Activated T-helper 1 cell treated with anti-CD3 and anti-CD28 coated beads, Interleukin-12 subunit alpha, Interleukin-12 subunit beta, Interleukin-2, Interleukin-4 antibody, amounts not matched to agents 30 ng/mL and 10 ng/mL and 1 ng/mL, durations not matched to agents 14 hours and 24 hours and 36 hours (primary cell): ENCODE measurements at regions of chr9 and their contacts with region 1.

Region 1: GRCh38 chr9:84296146-84296843 is 44.3 kb downstream of the SLC28A3 start:
- DNase-seq: peak; percentile 61
- H3K4me3 Mint-ChIP-seq: peak overlapping the region; percentile 66
- H3K27ac Mint-ChIP-seq: peak overlapping the region; percentile 100
- H3K4me1 Mint-ChIP-seq: peaks cover 83% of the 10 kb centered on the region
- H3K27me3 Mint-ChIP-seq: no peaks in the 10 kb centered on the region

Region 2: GRCh38 chr9:83707768-83708514 is 588.4 kb before region 1 on chr9 and contains the start of gene UBQLN1:
- intact Hi-C with region 1: loop called (anchors 5 kb)
- DNase-seq: peak; percentile 89
- H3K4me3 Mint-ChIP-seq: peak within 1 kb of the TSS; percentile 87
- H3K27ac Mint-ChIP-seq: peak within 1 kb of the TSS; percentile 96
- H3K4me1 Mint-ChIP-seq: peaks cover 36% of the 10 kb centered on the region
- H3K27me3 Mint-ChIP-seq: no peaks in the 10 kb centered on the region
- total RNA-seq, gene UBQLN1: 142 and 143 TPM in 2 replicates

Region 3: DNA sequence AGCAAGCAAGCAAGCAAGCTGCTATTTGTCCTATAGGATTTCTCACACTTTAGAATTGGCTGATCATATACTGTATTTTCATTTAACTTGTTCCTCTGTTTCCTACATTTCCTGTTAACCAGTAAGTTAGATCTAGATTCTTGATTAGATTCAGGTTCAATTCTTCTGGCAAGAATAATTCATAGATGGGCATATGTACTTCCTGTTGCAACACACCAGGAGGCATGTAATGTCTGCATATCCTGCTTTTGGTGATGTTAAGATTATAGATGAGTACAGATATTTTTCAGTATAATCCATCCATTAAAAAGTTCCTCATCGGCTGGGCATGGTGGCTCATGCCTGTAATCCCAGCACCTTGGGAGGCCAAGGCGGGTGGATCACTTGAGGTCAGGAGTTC is 364.3 kb before region 1 on chr9:
- intact Hi-C with region 1: no loop called
- DNase-seq: no peak
- H3K4me3 Mint-ChIP-seq: no peak overlapping the region
- H3K27ac Mint-ChIP-seq: no peak overlapping the region
- H3K4me1 Mint-ChIP-seq: peaks cover 13% of the 10 kb centered on the region
- H3K27me3 Mint-ChIP-seq: peaks cover 3% of the 10 kb centered on the region

Region 4: DNA sequence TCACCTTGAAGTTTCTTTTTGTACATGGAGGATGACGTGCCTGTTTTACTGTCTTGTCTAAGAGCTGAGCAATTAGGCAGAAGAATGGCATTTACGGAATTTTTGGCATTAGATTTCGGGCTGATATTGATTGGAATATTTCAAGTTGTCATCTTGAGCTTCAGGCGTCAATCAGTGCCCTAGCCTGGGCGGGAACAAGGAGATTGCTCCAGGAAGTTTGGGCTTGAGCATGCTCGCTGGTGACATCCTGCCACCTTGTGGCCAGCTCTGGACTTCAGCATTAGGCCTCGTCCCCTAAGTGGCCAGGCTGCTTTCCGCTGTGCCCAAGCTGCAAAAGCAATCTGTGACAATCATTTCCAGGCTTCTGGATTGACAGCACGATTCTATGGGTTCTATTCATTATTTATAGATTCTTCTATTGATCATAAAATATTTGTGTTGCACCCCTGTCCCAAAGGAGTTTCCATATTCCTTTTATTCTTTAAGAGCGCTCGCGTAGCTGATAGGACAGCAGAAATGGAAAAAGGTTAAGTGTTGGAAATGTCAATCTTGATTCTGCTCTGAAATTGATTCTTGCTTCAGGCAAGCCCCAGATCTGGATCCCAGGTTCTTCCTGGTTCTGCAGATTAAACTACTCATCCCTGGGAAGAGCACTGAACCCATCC is 35.1 kb before region 1 on chr9:
- intact Hi-C with region 1: loop called (anchors 5 kb)
- DNase-seq: peak; percentile 33
- H3K4me3 Mint-ChIP-seq: no peak overlapping the region
- H3K27ac Mint-ChIP-seq: no peak overlapping the region
- H3K4me1 Mint-ChIP-seq: peaks cover 21% of the 10 kb centered on the region
- H3K27me3 Mint-ChIP-seq: no peaks in the 10 kb centered on the region

Region 5: GRCh38 chr9:84315278-84315877 is 19.1 kb after region 1 on chr9:
- intact Hi-C with region 1: loop called (anchors 1 kb)
- DNase-seq: peak; percentile 46
- H3K4me3 Mint-ChIP-seq: no peak overlapping the region
- H3K27ac Mint-ChIP-seq: peak overlapping the region; percentile 15
- H3K4me1 Mint-ChIP-seq: peaks cover 41% of the 10 kb centered on the region
- H3K27me3 Mint-ChIP-seq: no peaks in the 10 kb centered on the region

Region 6: GRCh38 chr9:85940832-85941621 is 1644.7 kb after region 1 on chr9 and contains the start of gene NAA35:
- intact Hi-C with region 1: loop called (anchors 2 kb)
- DNase-seq: peak; percentile 99
- H3K4me3 Mint-ChIP-seq: no peak within 1 kb of the TSS
- H3K27ac Mint-ChIP-seq: peak within 1 kb of the TSS; percentile 97
- H3K4me1 Mint-ChIP-seq: peaks cover 16% of the 10 kb centered on the region
- H3K27me3 Mint-ChIP-seq: no peaks in the 10 kb centered on the region
- total RNA-seq, gene NAA35: 28.6 and 32.9 TPM in 2 replicates